ENCODE measurements at regions of chr1 and their contacts with region 1.

Region 1: DNA sequence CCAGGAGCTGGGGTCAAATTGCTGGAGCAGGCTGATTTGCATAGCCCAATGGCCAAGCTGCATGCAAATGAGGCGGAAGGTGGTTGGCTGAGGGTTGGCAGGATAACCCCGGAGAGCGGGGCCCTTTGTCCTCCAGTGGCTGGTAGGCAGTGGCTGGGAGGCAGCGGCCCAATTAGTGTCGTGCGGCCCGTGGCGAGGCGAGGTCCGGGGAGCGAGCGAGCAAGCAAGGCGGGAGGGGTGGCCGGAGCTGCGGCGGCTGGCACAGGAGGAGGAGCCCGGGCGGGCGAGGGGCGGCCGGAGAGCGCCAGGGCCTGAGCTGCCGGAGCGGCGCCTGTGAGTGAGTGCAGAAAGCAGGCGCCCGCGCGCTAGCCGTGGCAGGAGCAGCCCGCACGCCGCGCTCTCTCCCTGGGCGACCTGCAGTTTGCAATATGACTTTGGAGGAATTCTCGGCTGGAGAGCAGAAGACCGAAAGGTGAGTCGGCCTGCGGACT is at the start of gene GADD45A:
- DNase-seq: peak; percentile 98
- ATAC-seq: peak; percentile 91
- H3K4me3 ChIP-seq: peak within 1 kb of the TSS; percentile 97 to 99 (median 98)
- H3K27ac ChIP-seq: peak within 1 kb of the TSS; percentile 96
- H3K4me1 ChIP-seq: peaks cover 60% of the 10 kb centered on the region
- H3K27me3 ChIP-seq: no peaks in the 10 kb centered on the region; a peak in 1 of 5 replicates
- CTCF ChIP-seq: peak; percentile 23; the same call in 1 of the 2 replicates
- EP300 ChIP-seq: peak; percentile 14 to 22; a peak in 1 of 4 replicates
- POLR2A ChIP-seq: peak; percentile 98 to 100
- RAD21 ChIP-seq: peak; percentile 77
- total RNA-seq, gene GADD45A: 25.0 and 46.2 TPM in 2 replicates

Region 2: GRCh38 chr1:67430352-67431155 is 254.6 kb before region 1 on chr1 and contains the start of gene SERBP1:
- CTCF ChIA-PET with region 1: no interaction called
- POLR2A ChIA-PET with region 1: interaction called, 4 read pairs
- in situ Hi-C with region 1: no loop called
- intact Hi-C with region 1: loop called (anchors 5 kb)
- DNase-seq: peak; percentile 96
- ATAC-seq: peak; percentile 95
- H3K4me3 ChIP-seq: peak within 1 kb of the TSS; percentile 74 to 96 (median 77)
- H3K27ac ChIP-seq: peak within 1 kb of the TSS; percentile 93
- H3K4me1 ChIP-seq: peaks cover 31% of the 10 kb centered on the region
- H3K27me3 ChIP-seq: no peaks in the 10 kb centered on the region; a peak in 1 of 5 replicates
- CTCF ChIP-seq: no peak
- EP300 ChIP-seq: no peak
- POLR2A ChIP-seq: peak; percentile 79 to 86
- RAD21 ChIP-seq: no peak
- total RNA-seq, gene SERBP1: 281 and 464 TPM in 2 replicates

Region 3: DNA sequence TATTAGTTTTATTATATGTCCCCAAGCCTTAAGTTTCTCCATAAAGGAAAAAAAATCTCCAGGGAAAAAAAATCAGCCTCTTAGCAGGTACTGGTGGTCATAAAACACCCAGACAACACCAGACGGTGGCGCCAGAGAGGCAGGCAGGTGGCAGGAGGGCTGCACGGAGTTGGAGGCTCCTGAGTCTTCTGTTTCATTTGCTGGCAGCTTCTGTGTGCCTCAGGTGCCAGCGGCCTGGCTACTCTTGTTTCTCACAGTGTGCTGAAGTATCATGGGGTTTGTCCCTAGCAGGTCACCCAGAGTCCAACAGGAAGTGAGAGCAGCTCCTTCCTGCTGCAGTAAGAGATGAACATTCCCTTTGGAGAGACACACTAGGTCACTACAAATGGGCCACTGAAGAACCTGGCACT is 123.4 kb before region 1 on chr1:
- CTCF ChIA-PET with region 1: no interaction called
- POLR2A ChIA-PET with region 1: interaction called, 43 read pairs
- in situ Hi-C with region 1: loop called (anchors 10 kb)
- intact Hi-C with region 1: loop called (anchors 1 kb)
- DNase-seq: peak; percentile 74
- ATAC-seq: peak; percentile 90
- H3K4me3 ChIP-seq: no peak overlapping the region
- H3K27ac ChIP-seq: no peak overlapping the region
- H3K4me1 ChIP-seq: peaks cover 52% of the 10 kb centered on the region
- H3K27me3 ChIP-seq: 0 out of 5 replicates have a peak, but pooled peaks cover 0 to 6% of the 10 kb centered on the region in 2 experiments
- CTCF ChIP-seq: peak; percentile 88
- EP300 ChIP-seq: no peak
- POLR2A ChIP-seq: no peak
- RAD21 ChIP-seq: peak; percentile 91

Region 4: GRCh38 chr1:67646145-67647035 is 38.7 kb before region 1 on chr1:
- CTCF ChIA-PET with region 1: no interaction called
- POLR2A ChIA-PET with region 1: interaction called, 28 read pairs
- in situ Hi-C with region 1: no loop called
- intact Hi-C with region 1: loop called (anchors 5 kb)
- DNase-seq: no peak
- ATAC-seq: peak; percentile 64
- H3K4me3 ChIP-seq: peak overlapping the region in 1 of 3 experiments; percentile 29; a peak in 1 of 6 replicates
- H3K27ac ChIP-seq: peak overlapping the region; percentile 0
- H3K4me1 ChIP-seq: peaks cover 49% of the 10 kb centered on the region
- H3K27me3 ChIP-seq: no peaks in the 10 kb centered on the region
- CTCF ChIP-seq: no peak
- EP300 ChIP-seq: no peak
- POLR2A ChIP-seq: no peak
- RAD21 ChIP-seq: no peak

Region 5: GRCh38 chr1:67674260-67675011 is 10.7 kb before region 1 on chr1:
- CTCF ChIA-PET with region 1: no interaction called
- POLR2A ChIA-PET with region 1: interaction called, 20 read pairs
- in situ Hi-C with region 1: no loop called
- intact Hi-C with region 1: no loop called
- DNase-seq: no peak
- ATAC-seq: no peak
- H3K4me3 ChIP-seq: no peak overlapping the region
- H3K27ac ChIP-seq: no peak overlapping the region
- H3K4me1 ChIP-seq: peaks cover 12% of the 10 kb centered on the region; the same call in 1 of the 2 replicates
- H3K27me3 ChIP-seq: no peaks in the 10 kb centered on the region; a peak in 1 of 5 replicates
- CTCF ChIP-seq: no peak
- EP300 ChIP-seq: no peak
- POLR2A ChIP-seq: no peak
- RAD21 ChIP-seq: no peak

Region 6: DNA sequence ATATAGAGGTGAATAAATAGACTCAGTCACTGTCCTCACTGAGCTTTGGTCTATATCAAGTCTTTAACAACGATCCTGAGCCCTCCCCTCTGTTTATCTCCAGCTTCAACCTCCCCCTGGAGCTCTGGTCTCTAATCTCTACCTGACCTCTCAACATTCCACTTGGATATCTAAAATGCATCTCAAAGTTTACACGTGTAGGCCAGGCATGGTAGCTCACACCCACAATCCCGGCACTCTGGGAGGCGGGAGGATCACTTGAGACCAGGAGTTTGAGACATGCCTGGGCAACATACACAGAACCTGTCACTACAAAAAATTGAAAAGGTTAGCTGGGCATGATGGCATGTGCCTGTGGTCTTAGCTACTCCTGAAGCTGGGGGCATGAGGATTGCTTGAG is 53.3 kb after region 1 on chr1:
- CTCF ChIA-PET with region 1: no interaction called
- POLR2A ChIA-PET with region 1: interaction called, 11 read pairs
- in situ Hi-C with region 1: no loop called
- intact Hi-C with region 1: no loop called
- DNase-seq: peak; percentile 68
- ATAC-seq: peak; percentile 83
- H3K4me3 ChIP-seq: no peak overlapping the region
- H3K27ac ChIP-seq: peak overlapping the region; percentile 45
- H3K4me1 ChIP-seq: peaks cover 59% of the 10 kb centered on the region
- H3K27me3 ChIP-seq: no peaks in the 10 kb centered on the region; a peak in 1 of 5 replicates
- CTCF ChIP-seq: no peak
- EP300 ChIP-seq: peak in 1 of 2 experiments; percentile 33; a peak in 1 of 4 replicates
- POLR2A ChIP-seq: no peak
- RAD21 ChIP-seq: no peak